ENCODE measurements at regions of chr3 and their contacts with region 1.

Region 1: GRCh38 chr3:130925628-130926027 is 31.7 kb downstream of the ATP2C1 start:
- DNase-seq: no peak
- H3K4me3 ChIP-seq: no peak overlapping the region
- H3K27me3 ChIP-seq: no peaks in the 10 kb centered on the region
- CTCF ChIP-seq: no peak

Region 2: GRCh38 chr3:130516645-130517512 is 408.7 kb before region 1 on chr3 and contains the start of gene COL6A6:
- CTCF ChIA-PET with region 1: no interaction called
- POLR2A ChIA-PET with region 1: no interaction called
- DNase-seq: no peak
- H3K4me3 ChIP-seq: no peak within 1 kb of the TSS
- H3K27me3 ChIP-seq: peaks cover 2% of the 10 kb centered on the region
- CTCF ChIP-seq: no peak
- polyA plus RNA-seq, gene COL6A6: not detected in 2 replicates

Region 3: GRCh38 chr3:131973731-131974130 is 1048.1 kb after region 1 on chr3:
- CTCF ChIA-PET with region 1: no interaction called
- POLR2A ChIA-PET with region 1: interaction called, 13 read pairs
- DNase-seq: no peak
- H3K4me3 ChIP-seq: no peak overlapping the region
- H3K27me3 ChIP-seq: no peaks in the 10 kb centered on the region
- CTCF ChIP-seq: no peak

Measured in BJ (cell line).